ENCODE measurements at regions of chr16 and their contacts with region 1.

Region 1: GRCh38 chr16:10971560-10971961 is 27.2 kb downstream of the CLEC16A start:
- DNase-seq: peak; percentile 76
- H3K4me3 ChIP-seq: no peak overlapping the region
- H3K27ac ChIP-seq: peak overlapping the region in 2 of 4 donors; percentile 29 to 41
- H3K4me1 ChIP-seq: peaks cover 0 to 8% (median 5%) of the 10 kb centered on the region in 4 donors
- H3K27me3 ChIP-seq: no peaks in the 10 kb centered on the region
- CTCF ChIP-seq: peak; percentile 37 to 81 (median 72)
- EP300 ChIP-seq: no peak
- POLR2A ChIP-seq: no peak

Region 2: DNA sequence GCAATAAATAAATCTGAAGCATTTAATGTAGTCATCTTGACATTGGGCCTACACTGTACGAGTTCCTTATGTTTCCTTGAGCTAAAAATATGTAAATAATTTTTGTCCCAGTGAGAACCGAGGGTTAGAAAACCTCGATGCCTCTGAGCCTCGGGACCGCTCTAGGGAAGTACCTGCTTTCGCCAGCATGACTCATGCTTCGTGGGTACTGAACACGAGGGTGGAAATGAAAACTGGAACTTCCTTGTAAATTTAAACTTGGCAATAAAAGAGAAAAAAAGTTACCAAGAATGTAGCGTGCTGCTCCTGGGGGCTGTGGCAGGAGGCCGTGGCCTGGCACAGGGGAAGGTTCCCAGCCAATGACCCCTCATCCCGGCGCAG is 210.3 kb after region 1 on chr16:
- intact Hi-C with region 1: loop called (anchors 10 kb)
- DNase-seq: no peak
- H3K4me3 ChIP-seq: no peak overlapping the region
- H3K27ac ChIP-seq: peak overlapping the region in 1 of 4 donors; percentile 16
- H3K4me1 ChIP-seq: peaks cover 0 to 10% (median 7%) of the 10 kb centered on the region in 4 donors
- H3K27me3 ChIP-seq: no peaks in the 10 kb centered on the region
- CTCF ChIP-seq: no peak
- EP300 ChIP-seq: no peak
- POLR2A ChIP-seq: no peak

Measured in sigmoid colon (tissue), 7 donors.